ENCODE measurements at regions of chr6 and their contacts with region 1.

Region 1: GRCh38 chr6:4577406-4577805 is 198.8 kb upstream of the CDYL start:
- DNase-seq: no peak
- H3K4me3 ChIP-seq: no peak overlapping the region
- H3K27ac ChIP-seq: peak overlapping the region; percentile 3 to 59 (median 56)
- H3K4me1 ChIP-seq: peaks cover 0 to 20% (median 16%) of the 10 kb centered on the region in 4 donors
- H3K27me3 ChIP-seq: no peaks in the 10 kb centered on the region
- CTCF ChIP-seq: no peak
- EP300 ChIP-seq: peak in 2 of 4 donors; percentile 71 to 74
- POLR2A ChIP-seq: no peak

Region 2: GRCh38 chr6:4351520-4352315 is 225.7 kb before region 1 on chr6:
- intact Hi-C with region 1: loop called (anchors 5 kb)
- DNase-seq: peak; percentile 93
- H3K4me3 ChIP-seq: peak overlapping the region in 2 of 4 donors; percentile 13 to 28
- H3K27ac ChIP-seq: peak overlapping the region; percentile 82 to 88 (median 84)
- H3K4me1 ChIP-seq: peaks cover 0 to 56% (median 53%) of the 10 kb centered on the region in 4 donors
- H3K27me3 ChIP-seq: no peaks in the 10 kb centered on the region
- CTCF ChIP-seq: no peak
- EP300 ChIP-seq: peak in 3 of 4 donors; percentile 4 to 75 (median 42)
- POLR2A ChIP-seq: no peak

Region 3: DNA sequence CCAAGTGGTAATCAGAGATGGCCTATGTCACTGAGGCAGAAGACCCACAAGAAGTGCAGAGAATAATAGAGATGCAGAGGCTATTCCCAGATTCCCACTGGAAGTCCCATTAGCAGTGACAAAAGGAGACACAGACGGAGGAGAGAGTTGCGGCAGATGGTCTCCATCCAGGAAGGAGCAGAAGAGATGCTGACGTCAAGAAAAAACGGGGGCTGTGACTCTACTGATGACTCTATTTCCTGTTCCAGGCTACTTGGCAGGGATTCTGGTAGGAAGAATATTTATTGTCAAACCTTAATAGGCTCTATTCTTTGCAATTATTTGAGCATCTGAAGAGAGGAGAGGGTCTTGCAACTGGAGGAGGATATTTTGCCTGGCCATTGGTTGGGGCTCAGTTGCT is 196.0 kb before region 1 on chr6:
- intact Hi-C with region 1: no loop called
- DNase-seq: no peak
- H3K4me3 ChIP-seq: no peak overlapping the region
- H3K27ac ChIP-seq: peak overlapping the region in 2 of 4 donors; percentile 28 to 35
- H3K4me1 ChIP-seq: no peaks in the 10 kb centered on the region
- H3K27me3 ChIP-seq: no peaks in the 10 kb centered on the region
- CTCF ChIP-seq: no peak
- EP300 ChIP-seq: no peak
- POLR2A ChIP-seq: no peak

Region 4: GRCh38 chr6:4402439-4402976 is 174.9 kb before region 1 on chr6:
- intact Hi-C with region 1: no loop called
- DNase-seq: no peak
- H3K4me3 ChIP-seq: no peak overlapping the region
- H3K27ac ChIP-seq: peak overlapping the region in 3 of 4 donors; percentile 45 to 55 (median 49)
- H3K4me1 ChIP-seq: peaks cover 0 to 27% (median 15%) of the 10 kb centered on the region in 4 donors
- H3K27me3 ChIP-seq: no peaks in the 10 kb centered on the region
- CTCF ChIP-seq: no peak
- EP300 ChIP-seq: no peak
- POLR2A ChIP-seq: no peak

Region 5: DNA sequence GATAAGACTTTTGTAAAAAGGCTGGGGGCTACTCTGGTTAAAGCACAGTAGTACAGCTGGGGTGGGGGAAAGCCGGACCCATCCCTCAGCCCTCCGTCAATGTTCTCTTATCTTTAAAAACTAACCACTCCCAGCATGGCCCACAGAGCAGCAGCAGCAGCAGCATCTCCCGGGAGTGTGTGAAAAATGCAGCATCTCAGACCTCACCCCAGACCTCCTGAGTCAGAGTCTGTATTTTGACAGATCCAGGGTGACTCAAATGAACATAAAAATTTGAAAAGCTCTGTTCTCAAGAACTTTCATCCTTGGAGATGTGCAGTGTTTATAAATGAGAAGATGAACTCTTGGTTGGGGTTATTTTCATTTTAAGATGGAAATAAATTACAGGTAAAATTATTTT is 164.3 kb before region 1 on chr6:
- intact Hi-C with region 1: no loop called
- DNase-seq: no peak
- H3K4me3 ChIP-seq: no peak overlapping the region
- H3K27ac ChIP-seq: no peak overlapping the region
- H3K4me1 ChIP-seq: no peaks in the 10 kb centered on the region
- H3K27me3 ChIP-seq: no peaks in the 10 kb centered on the region
- CTCF ChIP-seq: no peak
- EP300 ChIP-seq: no peak
- POLR2A ChIP-seq: no peak

Region 6: DNA sequence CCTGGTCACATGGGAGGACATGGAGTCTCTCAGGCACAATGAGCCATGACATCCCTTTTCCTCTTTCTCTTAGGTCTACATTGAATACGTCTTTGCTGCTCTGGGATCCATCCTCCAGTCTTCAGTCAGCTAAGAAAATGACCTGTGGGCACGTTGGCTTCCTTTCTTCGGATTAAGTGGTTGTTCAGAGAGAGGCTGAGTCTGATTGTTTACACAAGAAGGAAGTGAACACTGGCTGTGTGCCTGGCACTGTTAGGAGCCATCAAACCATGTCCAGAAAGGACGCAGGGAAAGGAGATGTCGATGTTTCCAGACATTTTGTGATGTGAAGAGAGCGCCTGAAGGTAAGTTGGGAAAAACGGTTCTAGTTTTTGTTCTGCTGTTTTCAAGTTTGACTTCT is 111.1 kb before region 1 on chr6:
- intact Hi-C with region 1: no loop called
- DNase-seq: no peak
- H3K4me3 ChIP-seq: no peak overlapping the region
- H3K27ac ChIP-seq: no peak overlapping the region
- H3K4me1 ChIP-seq: peaks cover 0 to 5% (median 3%) of the 10 kb centered on the region in 4 donors
- H3K27me3 ChIP-seq: no peaks in the 10 kb centered on the region
- CTCF ChIP-seq: no peak
- EP300 ChIP-seq: no peak
- POLR2A ChIP-seq: no peak